ENCODE measurements at regions of chrX and their contacts with region 1.

Region 1: DNA sequence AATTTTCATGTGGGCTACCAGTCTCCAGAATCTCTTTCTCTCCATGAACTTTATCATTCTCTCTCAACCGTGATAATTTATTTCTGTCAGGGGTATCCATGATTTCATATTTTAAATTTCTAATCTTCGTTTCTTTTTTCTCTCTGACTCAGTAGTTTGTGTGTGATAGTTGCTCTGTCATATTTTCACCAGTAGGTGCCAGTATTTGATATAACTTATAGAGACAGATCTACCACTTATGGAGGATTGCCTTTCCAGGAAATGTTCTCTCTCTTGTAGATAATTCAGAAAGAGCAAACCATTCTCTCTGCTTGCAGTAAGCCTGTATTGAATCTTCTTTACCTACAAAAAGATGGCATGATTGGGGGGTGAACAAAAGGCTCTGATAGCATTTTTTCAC is 79.3 kb upstream of the DYNLT3 start:
- DNase-seq: peak; percentile 2 to 25
- ATAC-seq: peak in 1 of 2 experiments; percentile 68; a peak in 2 of 6 replicates
- H3K4me3 ChIP-seq: no peak overlapping the region
- H3K27ac ChIP-seq: no peak overlapping the region
- H3K4me1 ChIP-seq: 0 out of 3 replicates have a peak, but pooled peaks cover 3% of the 10 kb centered on the region
- CTCF ChIP-seq: peak; percentile 40
- EP300 ChIP-seq: no peak
- POLR2A ChIP-seq: no peak
- RAD21 ChIP-seq: peak; percentile 51 to 61

Region 2: GRCh38 chrX:38166478-38167083 is 239.9 kb after region 1 on chrX:
- CTCF ChIA-PET with region 1: interaction called, 32 read pairs
- POLR2A ChIA-PET with region 1: no interaction called
- DNase-seq: peak; percentile 4 to 18
- ATAC-seq: no peak
- H3K4me3 ChIP-seq: no peak overlapping the region
- H3K27ac ChIP-seq: no peak overlapping the region
- H3K4me1 ChIP-seq: no peaks in the 10 kb centered on the region
- CTCF ChIP-seq: peak; percentile 67
- EP300 ChIP-seq: no peak
- POLR2A ChIP-seq: no peak
- RAD21 ChIP-seq: peak; percentile 56 to 73

Region 3: DNA sequence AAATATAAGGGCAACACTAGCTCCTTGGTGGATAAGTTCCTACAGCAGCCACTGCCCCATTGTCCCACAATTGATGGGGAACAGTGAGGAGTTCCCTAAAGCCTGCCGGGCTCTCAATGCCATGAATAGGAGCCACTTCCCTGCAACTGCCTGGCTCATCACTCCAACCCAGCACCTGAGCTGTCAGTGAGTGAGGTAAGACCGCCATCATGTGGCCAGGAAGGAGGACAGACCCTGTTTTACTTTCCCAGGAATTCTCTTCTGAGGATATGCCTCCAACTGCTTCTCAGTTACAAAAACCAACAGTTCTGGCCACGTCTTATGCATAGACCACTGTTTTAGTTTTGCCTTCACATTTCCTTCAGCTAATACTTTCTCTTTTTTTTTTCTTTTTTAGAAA is 248.4 kb after region 1 on chrX:
- CTCF ChIA-PET with region 1: interaction called, 11 read pairs
- POLR2A ChIA-PET with region 1: no interaction called
- DNase-seq: peak; percentile 18 to 64
- ATAC-seq: peak; percentile 97
- H3K4me3 ChIP-seq: no peak overlapping the region
- H3K27ac ChIP-seq: no peak overlapping the region
- H3K4me1 ChIP-seq: no peaks in the 10 kb centered on the region
- CTCF ChIP-seq: peak; percentile 66
- EP300 ChIP-seq: no peak
- POLR2A ChIP-seq: no peak
- RAD21 ChIP-seq: peak; percentile 78 to 84